K562 (cell line): ENCODE measurements at regions of chr19 and their contacts with region 1.

Region 1: GRCh38 chr19:5891938-5892771 is 11.4 kb downstream of the NDUFA11 start:
- DNase-seq: peak; percentile 60 to 69 (median 64)
- ATAC-seq: peak; percentile 74
- H3K4me3 ChIP-seq: no peak overlapping the region
- H3K27ac ChIP-seq: no peak overlapping the region
- H3K4me1 ChIP-seq: peaks cover 16 to 63% of the 10 kb centered on the region in 2 experiments
- H3K27me3 ChIP-seq: no peaks in the 10 kb centered on the region
- CTCF ChIP-seq: peak; percentile 73 to 82 (median 78)
- EP300 ChIP-seq: no peak
- POLR2A ChIP-seq: peak; percentile 65
- RAD21 ChIP-seq: peak; percentile 56 to 68

Region 2: GRCh38 chr19:5774921-5775320 is 117.2 kb before region 1 on chr19:
- CTCF ChIA-PET with region 1: interaction called, 11 read pairs
- POLR2A ChIA-PET with region 1: no interaction called
- in situ Hi-C with region 1: no loop called
- intact Hi-C with region 1: no loop called
- DNase-seq: no peak
- ATAC-seq: no peak
- H3K4me3 ChIP-seq: no peak overlapping the region
- H3K27ac ChIP-seq: no peak overlapping the region
- H3K4me1 ChIP-seq: peaks cover 0 to 10% of the 10 kb centered on the region in 2 experiments; a peak in 4 of 5 replicates
- H3K27me3 ChIP-seq: peaks cover 2 to 11% of the 10 kb centered on the region in 2 experiments; a peak in 2 of 5 replicates
- CTCF ChIP-seq: no peak
- EP300 ChIP-seq: no peak
- POLR2A ChIP-seq: no peak
- RAD21 ChIP-seq: no peak

Region 3: DNA sequence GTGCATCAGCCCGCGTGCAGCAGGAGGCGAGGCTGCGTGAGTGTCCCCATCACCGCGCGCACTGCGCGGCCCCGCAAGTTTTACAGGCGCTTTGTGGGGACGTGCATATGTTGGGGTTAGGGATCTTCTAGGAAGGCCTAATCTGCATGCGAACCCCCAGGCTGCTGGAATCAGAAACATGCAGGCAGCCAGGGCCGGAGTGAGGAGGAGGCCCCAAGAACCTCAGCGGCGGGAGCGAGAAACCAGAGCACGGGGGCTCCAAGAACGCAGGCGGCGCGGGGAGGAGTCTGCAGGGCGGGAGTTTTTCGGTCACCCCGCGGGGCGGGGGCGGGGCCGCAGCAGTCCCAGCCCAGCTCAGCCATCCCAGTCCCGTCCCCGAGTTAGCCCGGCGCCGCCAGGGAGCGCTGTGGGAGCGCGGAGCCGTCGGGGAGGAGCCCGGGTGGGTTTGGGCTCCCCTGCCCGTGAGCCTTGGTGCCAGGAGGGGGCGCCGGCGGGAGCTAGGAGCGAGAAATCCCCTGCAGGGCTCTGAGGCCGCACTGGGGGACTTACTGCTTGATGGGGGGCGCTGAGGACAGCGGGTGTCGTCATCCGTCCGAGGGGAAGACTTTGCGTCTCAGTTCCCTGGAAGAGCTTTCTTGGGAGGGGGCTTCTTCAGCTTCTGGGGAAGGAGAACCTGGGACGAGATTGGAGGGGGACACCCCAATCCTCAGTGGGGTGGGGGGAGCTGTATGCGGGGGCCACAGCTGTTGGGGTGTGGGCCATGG is 88.2 kb before region 1 on chr19:
- CTCF ChIA-PET with region 1: interaction called, 48 read pairs
- POLR2A ChIA-PET with region 1: interaction called, 5 read pairs
- in situ Hi-C with region 1: loop called (anchors 5 kb)
- intact Hi-C with region 1: loop called (anchors 1 kb)
- DNase-seq: peak; percentile 94 to 97 (median 96)
- ATAC-seq: peak; percentile 93
- H3K4me3 ChIP-seq: peak overlapping the region; percentile 30; the same call in 1 of the 2 replicates
- H3K27ac ChIP-seq: peak overlapping the region; percentile 5; the same call in 2 of the 3 replicates
- H3K4me1 ChIP-seq: peaks cover 34 to 76% of the 10 kb centered on the region in 2 experiments
- H3K27me3 ChIP-seq: no peaks in the 10 kb centered on the region
- CTCF ChIP-seq: peak; percentile 98 to 100 (median 99)
- EP300 ChIP-seq: no peak
- POLR2A ChIP-seq: no peak
- RAD21 ChIP-seq: peak; percentile 91 to 96

Region 4: GRCh38 chr19:5904352-5905113 is 12.4 kb after region 1 on chr19 and contains the start of gene VMAC:
- CTCF ChIA-PET with region 1: no interaction called
- POLR2A ChIA-PET with region 1: interaction called, 28 read pairs
- in situ Hi-C with region 1: no loop called
- intact Hi-C with region 1: no loop called
- DNase-seq: peak; percentile 98 to 100 (median 98)
- ATAC-seq: peak; percentile 90
- H3K4me3 ChIP-seq: peak within 1 kb of the TSS; percentile 90
- H3K27ac ChIP-seq: peak within 1 kb of the TSS; percentile 96
- H3K4me1 ChIP-seq: peaks cover 4 to 30% of the 10 kb centered on the region in 2 experiments; a peak in 4 of 5 replicates
- H3K27me3 ChIP-seq: no peaks in the 10 kb centered on the region
- CTCF ChIP-seq: no peak
- EP300 ChIP-seq: no peak
- POLR2A ChIP-seq: no peak; the same call in 1 of the 2 replicates
- RAD21 ChIP-seq: no peak
- polyA plus RNA-seq, gene VMAC: 0.03 to 0.06 TPM

Region 5: GRCh38 chr19:5914921-5915781 is 23.0 kb after region 1 on chr19:
- CTCF ChIA-PET with region 1: no interaction called
- POLR2A ChIA-PET with region 1: no interaction called
- in situ Hi-C with region 1: no loop called
- intact Hi-C with region 1: no loop called
- DNase-seq: no peak
- ATAC-seq: peak; percentile 16
- H3K4me3 ChIP-seq: no peak overlapping the region
- H3K27ac ChIP-seq: no peak overlapping the region
- H3K4me1 ChIP-seq: peaks cover 0 to 15% of the 10 kb centered on the region in 2 experiments; a peak in 2 of 5 replicates
- H3K27me3 ChIP-seq: no peaks in the 10 kb centered on the region
- CTCF ChIP-seq: no peak
- EP300 ChIP-seq: no peak
- POLR2A ChIP-seq: no peak
- RAD21 ChIP-seq: no peak